ENCODE measurements at regions of chr4 and their contacts with region 1.

Region 1: GRCh38 chr4:38160487-38161207 is 200.4 kb downstream of the PTTG2 start:
- DNase-seq: peak; percentile 72
- H3K4me3 Mint-ChIP-seq: no peak overlapping the region
- H3K27ac Mint-ChIP-seq: no peak overlapping the region
- H3K4me1 Mint-ChIP-seq: peaks cover 73% of the 10 kb centered on the region
- H3K27me3 Mint-ChIP-seq: no peaks in the 10 kb centered on the region

Region 2: GRCh38 chr4:37977471-37978247 is 183.0 kb before region 1 on chr4:
- CTCF ChIA-PET with region 1: no interaction called
- intact Hi-C with region 1: loop called (anchors 5 kb)
- DNase-seq: peak; percentile 83
- H3K4me3 Mint-ChIP-seq: peak overlapping the region; percentile 77
- H3K27ac Mint-ChIP-seq: peak overlapping the region; percentile 26
- H3K4me1 Mint-ChIP-seq: peaks cover 27% of the 10 kb centered on the region
- H3K27me3 Mint-ChIP-seq: no peaks in the 10 kb centered on the region

Region 3: DNA sequence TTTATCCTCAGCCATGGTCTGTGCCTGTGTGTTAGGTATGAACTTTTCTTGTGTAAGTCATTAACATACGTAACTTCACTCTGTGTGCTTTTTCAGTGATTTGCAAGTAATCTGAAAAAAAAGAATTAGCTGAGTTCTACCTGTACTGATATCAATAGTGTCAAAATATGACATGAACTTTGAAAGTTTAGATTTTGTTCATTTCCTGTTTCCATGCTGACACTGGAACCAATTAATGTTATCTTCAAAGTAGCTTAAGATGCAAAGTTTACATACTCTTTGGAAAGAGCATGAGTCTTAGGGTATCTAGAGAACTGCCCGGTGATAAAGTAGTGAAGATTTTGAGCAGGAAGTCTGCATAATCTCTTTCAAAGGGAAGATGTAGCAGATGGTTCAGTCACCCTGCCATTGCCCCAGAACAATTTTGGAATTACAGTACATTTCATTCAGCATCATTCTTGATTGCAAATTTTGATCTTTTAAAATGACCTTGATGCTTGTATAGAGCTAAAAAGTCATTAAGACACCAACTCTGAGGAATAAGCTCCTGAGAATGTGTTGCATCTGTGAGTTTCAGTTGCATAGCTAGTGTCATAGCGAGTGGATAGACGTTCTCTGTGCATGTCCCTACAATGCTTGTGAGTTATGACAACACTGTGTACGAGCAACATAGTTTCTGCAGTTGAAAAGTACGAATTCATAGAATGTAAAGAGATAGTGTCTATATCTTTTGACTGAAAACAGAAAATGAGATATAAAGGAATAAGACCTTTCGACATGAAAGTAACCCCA is 70.0 kb before region 1 on chr4:
- CTCF ChIA-PET with region 1: no interaction called
- intact Hi-C with region 1: loop called (anchors 1 kb)
- DNase-seq: no peak
- H3K4me3 Mint-ChIP-seq: no peak overlapping the region
- H3K27ac Mint-ChIP-seq: peak overlapping the region; percentile 77
- H3K4me1 Mint-ChIP-seq: peaks cover 23% of the 10 kb centered on the region
- H3K27me3 Mint-ChIP-seq: no peaks in the 10 kb centered on the region

Region 4: GRCh38 chr4:38174801-38175200 is 14.2 kb after region 1 on chr4:
- CTCF ChIA-PET with region 1: interaction called, 4 read pairs
- intact Hi-C with region 1: loop called (anchors 1 kb)
- DNase-seq: no peak
- H3K4me3 Mint-ChIP-seq: no peak overlapping the region
- H3K27ac Mint-ChIP-seq: peak overlapping the region; percentile 14
- H3K4me1 Mint-ChIP-seq: peaks cover 42% of the 10 kb centered on the region
- H3K27me3 Mint-ChIP-seq: no peaks in the 10 kb centered on the region

Region 5: DNA sequence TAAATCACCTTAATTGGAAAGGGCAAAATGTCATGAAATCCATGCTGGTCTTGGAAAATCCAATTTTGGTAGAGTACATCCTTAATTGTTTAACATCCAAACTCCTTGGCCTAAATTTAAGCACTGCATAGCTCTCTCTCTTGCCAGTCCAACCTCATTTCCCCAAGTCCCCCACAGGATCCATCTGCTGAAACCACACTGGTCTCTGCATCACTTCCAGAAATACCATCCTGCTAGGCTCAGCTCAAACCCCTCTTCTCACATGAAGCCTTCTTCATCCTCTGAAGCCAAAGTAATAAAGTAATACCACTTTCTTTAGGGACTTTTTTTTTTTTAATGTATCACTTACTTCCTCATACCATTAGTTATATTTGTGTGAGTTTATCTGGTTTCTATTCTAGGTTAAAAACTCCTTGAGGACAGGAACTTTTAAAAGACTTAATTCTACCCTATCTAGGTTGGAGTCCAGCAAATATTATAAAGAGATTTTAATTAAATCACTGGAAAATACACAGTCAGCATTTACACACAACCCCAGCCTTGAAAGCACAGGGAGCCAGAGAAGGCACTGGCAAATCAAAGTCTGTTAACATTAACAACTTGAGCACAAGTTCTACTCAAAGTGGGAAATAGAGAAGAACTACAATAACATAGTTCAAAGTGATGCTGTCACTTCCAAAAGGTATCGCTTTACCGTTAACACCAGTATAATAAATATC is 486.6 kb after region 1 on chr4:
- CTCF ChIA-PET with region 1: no interaction called
- intact Hi-C with region 1: no loop called
- DNase-seq: no peak
- H3K4me3 Mint-ChIP-seq: no peak overlapping the region
- H3K27ac Mint-ChIP-seq: no peak overlapping the region
- H3K4me1 Mint-ChIP-seq: peaks cover 7% of the 10 kb centered on the region
- H3K27me3 Mint-ChIP-seq: no peaks in the 10 kb centered on the region

Region 6: DNA sequence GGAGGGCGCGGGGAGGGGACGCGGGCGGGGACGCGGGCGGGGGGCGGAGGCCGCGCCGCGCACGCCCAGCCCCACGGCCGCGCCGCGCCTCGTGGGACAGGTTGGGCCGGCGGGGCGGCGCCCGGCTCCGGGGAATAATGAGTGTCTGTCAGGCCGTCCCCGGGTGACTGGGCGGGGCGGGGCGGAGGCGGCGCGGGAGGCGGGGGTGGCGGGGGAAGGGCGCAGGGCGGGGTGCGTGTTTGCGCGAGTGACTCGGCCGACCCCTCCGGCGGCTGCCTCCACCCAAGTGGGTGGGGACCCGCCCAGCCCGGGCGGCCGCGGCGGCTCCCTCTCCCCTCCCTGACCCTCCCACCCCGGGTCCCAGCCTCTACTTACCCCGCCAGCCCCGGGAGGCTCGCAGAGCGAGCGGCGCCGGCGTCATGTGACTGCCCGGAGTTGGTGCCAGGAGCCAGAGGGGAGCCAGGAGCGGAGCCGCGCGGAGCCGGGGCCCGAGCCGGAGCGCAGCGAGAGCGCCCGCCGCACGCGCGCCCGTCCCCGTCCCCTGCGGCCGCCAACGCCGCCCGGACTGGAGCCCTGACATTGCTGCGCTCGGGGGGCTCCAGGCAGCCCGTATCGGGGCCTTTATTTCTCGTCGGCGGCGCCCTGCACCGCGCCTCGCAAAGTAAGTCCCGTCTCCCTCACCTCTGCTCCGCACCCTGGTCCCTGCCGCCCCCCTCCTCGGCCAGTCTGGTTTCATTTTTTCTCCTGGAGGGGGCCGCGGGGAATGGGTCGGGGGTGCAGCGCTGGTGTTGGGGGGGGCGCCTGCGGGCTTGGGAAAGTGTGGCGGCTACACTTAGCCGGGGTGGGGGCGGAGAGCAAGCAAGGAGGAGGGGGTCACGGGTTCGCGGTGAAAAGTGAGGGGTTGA is 503.4 kb after region 1 on chr4 and contains the start of gene KLF3:
- CTCF ChIA-PET with region 1: no interaction called
- intact Hi-C with region 1: loop called (anchors 1 kb)
- DNase-seq: peak; percentile 86
- H3K4me3 Mint-ChIP-seq: peak within 1 kb of the TSS; percentile 79
- H3K27ac Mint-ChIP-seq: peak within 1 kb of the TSS; percentile 87
- H3K4me1 Mint-ChIP-seq: peaks cover 66% of the 10 kb centered on the region
- H3K27me3 Mint-ChIP-seq: no peaks in the 10 kb centered on the region
- total RNA-seq, gene KLF3: 15.2 to 15.8 TPM

Measured in activated naive CD4-positive, alpha-beta T cell treated with anti-CD3 and anti-CD28 coated beads for 36 hours (primary cell).